GM12878 (cell line): ENCODE measurements at regions of chr7 and their contacts with region 1.

Region 1: DNA sequence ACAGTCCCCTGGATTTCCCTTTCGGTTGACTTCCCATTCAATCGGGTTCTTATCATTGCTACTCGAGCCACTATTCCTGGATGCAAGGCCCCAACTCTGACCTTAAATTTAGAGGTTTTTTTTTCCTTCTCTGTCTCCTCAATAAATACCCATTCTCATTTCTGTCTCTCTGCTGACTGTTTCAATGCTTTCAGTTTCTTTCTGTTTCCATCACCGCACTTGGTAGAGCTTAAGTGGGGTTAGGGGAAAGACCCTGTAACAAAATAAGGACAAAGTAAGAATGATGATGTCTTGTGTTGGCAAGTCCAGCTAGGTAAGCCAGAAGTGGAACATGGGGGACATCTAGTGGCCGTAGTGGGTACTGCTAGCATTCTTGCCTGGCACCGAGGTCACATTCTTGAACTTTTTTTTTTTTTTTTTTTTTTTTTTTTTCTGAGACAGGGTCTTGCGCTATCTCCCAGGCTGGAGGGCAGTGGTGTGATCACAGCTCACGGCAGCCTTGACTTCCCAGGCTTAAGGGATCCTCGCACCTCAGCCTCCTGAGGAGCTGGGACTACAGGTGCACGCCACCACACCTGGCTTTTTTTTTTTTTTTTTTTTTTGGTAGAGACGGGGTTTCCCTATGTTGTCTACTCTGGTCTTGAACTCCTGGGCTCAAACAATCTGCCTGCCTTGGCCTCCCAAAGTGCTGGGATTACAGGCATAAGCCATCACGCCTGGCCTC is 40.3 kb downstream of the ZC3HC1 start:
- DNase-seq: peak; percentile 92
- ATAC-seq: peak; percentile 90
- H3K4me3 ChIP-seq: no peak overlapping the region
- H3K27ac ChIP-seq: peak overlapping the region; percentile 61
- H3K4me1 ChIP-seq: peaks cover 27% of the 10 kb centered on the region
- H3K27me3 ChIP-seq: no peaks in the 10 kb centered on the region
- CTCF ChIP-seq: peak; percentile 92 to 96 (median 94)
- EP300 ChIP-seq: no peak
- POLR2A ChIP-seq: no peak
- RAD21 ChIP-seq: peak; percentile 98

Region 2: GRCh38 chr7:129611246-129612111 is 399.4 kb before region 1 on chr7 and contains the start of gene NRF1:
- CTCF ChIA-PET with region 1: interaction called, 9 read pairs
- POLR2A ChIA-PET with region 1: no interaction called
- RAD21 ChIA-PET with region 1: interaction called, 8 read pairs
- SMC1A ChIA-PET with region 1: interaction called, 10 read pairs
- in situ Hi-C with region 1: no loop called
- intact Hi-C with region 1: no loop called
- DNase-seq: peak; percentile 57
- ATAC-seq: peak; percentile 87
- H3K4me3 ChIP-seq: peak within 1 kb of the TSS; percentile 96
- H3K27ac ChIP-seq: peak within 1 kb of the TSS; percentile 91
- H3K4me1 ChIP-seq: peaks cover 23% of the 10 kb centered on the region
- H3K27me3 ChIP-seq: no peaks in the 10 kb centered on the region
- CTCF ChIP-seq: peak in 1 of 3 experiments; percentile 15; a peak in 2 of 6 replicates
- EP300 ChIP-seq: no peak
- POLR2A ChIP-seq: peak; percentile 96
- RAD21 ChIP-seq: no peak
- polyA plus RNA-seq, gene NRF1: 3.5 TPM

Region 3: DNA sequence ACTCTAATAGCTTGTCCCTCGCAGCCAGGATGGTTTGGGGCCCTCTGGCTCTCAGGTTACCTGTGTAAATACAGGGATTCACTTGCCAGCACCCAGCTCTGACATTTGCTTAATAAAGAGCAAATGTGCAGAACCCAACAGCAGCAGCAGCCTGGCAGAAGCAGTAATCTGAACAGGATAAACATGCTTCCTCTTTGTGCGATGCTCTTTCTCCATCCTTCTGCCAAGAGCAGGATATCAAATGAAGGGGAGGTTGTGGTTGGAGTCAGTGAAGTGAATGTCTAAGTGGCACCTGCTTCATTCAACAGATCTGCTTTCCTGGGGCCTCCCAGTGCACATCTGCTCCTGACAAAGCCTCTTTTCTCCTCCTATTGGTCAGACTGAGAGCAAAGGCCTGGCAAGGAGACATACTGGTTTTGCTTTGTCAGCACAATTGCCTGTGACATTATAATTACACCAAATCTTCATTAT is 269.1 kb before region 1 on chr7:
- CTCF ChIA-PET with region 1: no interaction called
- POLR2A ChIA-PET with region 1: no interaction called
- RAD21 ChIA-PET with region 1: no interaction called
- SMC1A ChIA-PET with region 1: no interaction called
- in situ Hi-C with region 1: no loop called
- intact Hi-C with region 1: loop called (anchors 10 kb)
- DNase-seq: no peak
- ATAC-seq: no peak
- H3K4me3 ChIP-seq: no peak overlapping the region
- H3K27ac ChIP-seq: no peak overlapping the region
- H3K4me1 ChIP-seq: no peaks in the 10 kb centered on the region
- H3K27me3 ChIP-seq: no peaks in the 10 kb centered on the region
- CTCF ChIP-seq: no peak
- EP300 ChIP-seq: no peak
- POLR2A ChIP-seq: no peak
- RAD21 ChIP-seq: no peak

Region 4: GRCh38 chr7:129831424-129832112 is 179.3 kb before region 1 on chr7:
- CTCF ChIA-PET with region 1: interaction called, 107 read pairs
- POLR2A ChIA-PET with region 1: interaction called, 3 read pairs
- RAD21 ChIA-PET with region 1: interaction called, 36 read pairs
- SMC1A ChIA-PET with region 1: interaction called, 53 read pairs
- in situ Hi-C with region 1: loop called (anchors 5 kb)
- intact Hi-C with region 1: loop called (anchors 1 kb)
- DNase-seq: no peak
- ATAC-seq: no peak
- H3K4me3 ChIP-seq: no peak overlapping the region
- H3K27ac ChIP-seq: no peak overlapping the region
- H3K4me1 ChIP-seq: no peaks in the 10 kb centered on the region
- H3K27me3 ChIP-seq: no peaks in the 10 kb centered on the region
- CTCF ChIP-seq: no peak
- EP300 ChIP-seq: no peak
- POLR2A ChIP-seq: no peak
- RAD21 ChIP-seq: no peak

Region 5: DNA sequence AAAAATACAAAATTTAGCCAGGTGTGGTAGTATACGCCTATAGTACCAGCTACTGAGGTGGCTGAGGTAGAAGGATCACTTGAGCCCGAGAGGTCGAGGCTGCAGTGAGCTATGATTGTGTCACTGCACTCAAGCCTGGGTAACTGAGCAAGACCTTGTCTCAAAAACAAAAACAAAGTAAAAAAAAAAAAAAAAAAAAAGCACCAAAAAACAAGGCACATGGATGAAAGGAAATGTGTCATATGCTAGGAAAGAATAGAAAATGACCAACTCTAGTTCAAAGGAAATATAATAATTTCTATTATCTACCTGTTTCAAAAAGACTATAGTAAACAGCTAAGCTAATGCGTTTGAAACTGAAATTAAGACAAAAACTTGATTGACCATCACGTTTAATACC is 91.9 kb before region 1 on chr7:
- CTCF ChIA-PET with region 1: interaction called, 5 read pairs
- POLR2A ChIA-PET with region 1: no interaction called
- RAD21 ChIA-PET with region 1: interaction called, 11 read pairs
- SMC1A ChIA-PET with region 1: interaction called, 3 read pairs
- in situ Hi-C with region 1: no loop called
- intact Hi-C with region 1: no loop called
- DNase-seq: no peak
- ATAC-seq: no peak
- H3K4me3 ChIP-seq: no peak overlapping the region
- H3K27ac ChIP-seq: no peak overlapping the region
- H3K4me1 ChIP-seq: peaks cover 5% of the 10 kb centered on the region
- H3K27me3 ChIP-seq: no peaks in the 10 kb centered on the region
- CTCF ChIP-seq: no peak
- EP300 ChIP-seq: no peak
- POLR2A ChIP-seq: no peak
- RAD21 ChIP-seq: no peak

Region 6: DNA sequence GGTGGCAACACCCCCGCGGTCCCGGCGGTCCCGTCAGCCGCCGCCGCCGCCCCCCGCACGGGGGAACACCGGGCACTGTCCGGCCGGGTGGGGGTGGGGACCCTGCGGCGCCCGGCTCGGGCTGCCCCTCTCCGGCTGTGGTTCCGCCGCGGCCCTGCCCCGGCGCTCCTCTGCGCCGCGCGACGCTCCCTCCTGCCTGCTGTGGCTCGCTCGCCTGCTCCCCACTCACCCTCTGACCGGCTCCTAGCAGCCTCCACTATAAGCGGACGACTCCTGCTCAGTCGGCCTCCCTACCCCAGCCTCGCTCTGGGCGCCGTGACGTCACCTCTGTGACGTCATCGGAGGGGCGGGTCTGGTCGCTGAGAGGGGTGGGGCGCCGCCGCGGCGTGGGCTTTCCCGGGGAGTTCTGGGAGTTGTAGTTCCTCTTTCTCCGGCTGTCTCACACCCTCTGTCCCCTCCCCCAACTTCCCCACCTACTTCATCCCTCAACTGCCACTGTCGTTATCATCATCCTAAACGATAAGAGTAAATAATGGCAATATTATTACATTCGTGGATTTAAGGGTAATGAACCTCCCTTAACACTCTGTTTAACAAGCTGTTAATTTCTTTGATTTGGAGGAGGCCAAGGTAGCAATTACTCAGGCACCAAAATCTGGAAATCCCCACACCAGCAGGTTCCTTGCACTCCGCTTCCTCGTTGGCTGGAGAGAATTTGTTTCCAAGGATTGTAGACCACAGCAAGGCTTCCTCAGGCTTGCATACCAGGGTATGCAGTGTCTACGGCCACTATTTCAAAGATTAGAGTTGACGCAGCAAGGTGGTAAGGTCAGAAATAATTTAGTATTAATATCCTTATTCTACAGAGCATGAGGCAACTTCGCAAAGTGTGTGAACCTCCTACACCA is 57.9 kb before region 1 on chr7 and contains the start of gene UBE2H:
- CTCF ChIA-PET with region 1: interaction called, 51 read pairs
- POLR2A ChIA-PET with region 1: interaction called, 54 read pairs
- RAD21 ChIA-PET with region 1: interaction called, 84 read pairs
- SMC1A ChIA-PET with region 1: interaction called, 57 read pairs
- in situ Hi-C with region 1: no loop called
- intact Hi-C with region 1: loop called (anchors 1 kb)
- DNase-seq: peak; percentile 72
- ATAC-seq: peak; percentile 60
- H3K4me3 ChIP-seq: peak within 1 kb of the TSS; percentile 98
- H3K27ac ChIP-seq: peak within 1 kb of the TSS; percentile 99
- H3K4me1 ChIP-seq: peaks cover 10% of the 10 kb centered on the region; the same call in 1 of the 2 replicates
- H3K27me3 ChIP-seq: no peaks in the 10 kb centered on the region
- CTCF ChIP-seq: no peak
- EP300 ChIP-seq: no peak
- POLR2A ChIP-seq: peak; percentile 87
- RAD21 ChIP-seq: no peak
- polyA plus RNA-seq, gene UBE2H: 15.6 to 16.8 TPM